ENCODE measurements at regions of chr4 and their contacts with region 1.

Region 1: DNA sequence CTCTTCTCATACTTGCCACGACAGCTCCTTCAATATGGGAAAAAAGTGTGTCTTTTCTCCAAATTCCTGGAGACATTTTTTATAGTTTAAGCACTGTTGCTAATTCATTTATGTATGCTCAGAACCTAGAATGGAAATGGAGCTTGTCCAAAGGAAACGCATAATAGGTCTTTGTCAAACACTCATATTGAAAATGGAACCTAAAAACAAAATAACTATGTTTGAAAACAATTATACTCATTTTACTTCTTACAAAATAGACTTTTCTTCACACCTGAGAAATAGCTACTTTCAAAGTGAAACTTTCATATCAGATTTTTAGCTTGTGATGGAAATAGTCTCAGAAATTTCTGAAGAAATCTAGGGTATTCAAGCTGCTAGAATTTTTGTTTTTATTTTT is 529.7 kb upstream of the BOD1L1 start:
- DNase-seq: no peak
- ATAC-seq: no peak
- H3K4me3 Mint-ChIP-seq: no peak overlapping the region
- H3K27ac Mint-ChIP-seq: no peak overlapping the region
- H3K4me1 Mint-ChIP-seq: no peaks in the 10 kb centered on the region
- H3K27me3 Mint-ChIP-seq: peaks cover 4% of the 10 kb centered on the region

Region 2: DNA sequence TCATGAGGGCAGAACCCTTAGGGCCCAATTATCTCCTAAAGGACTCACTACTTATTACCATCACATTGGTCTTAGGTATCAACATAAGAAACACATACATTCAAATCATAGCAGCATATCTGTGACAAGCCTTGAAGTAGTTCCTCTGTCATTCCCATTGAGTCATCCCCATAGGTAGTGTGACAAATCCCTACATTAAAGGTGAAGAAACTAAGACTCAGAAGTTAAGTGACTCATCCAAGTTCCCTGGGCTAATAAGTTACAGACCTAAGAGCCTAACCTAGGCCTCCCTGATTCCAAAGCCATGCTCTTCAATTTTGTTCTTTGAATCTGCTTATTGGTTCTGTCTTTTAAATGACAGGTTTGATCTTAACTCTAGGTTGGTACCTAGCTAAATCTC is 1679.1 kb after region 1 on chr4:
- CTCF ChIA-PET with region 1: no interaction called
- POLR2A ChIA-PET with region 1: no interaction called
- intact Hi-C with region 1: loop called in 1 of 2 experiments (anchors 5 kb)
- DNase-seq: no peak
- ATAC-seq: peak; percentile 90
- H3K4me3 Mint-ChIP-seq: no peak overlapping the region
- H3K27ac Mint-ChIP-seq: no peak overlapping the region
- H3K4me1 Mint-ChIP-seq: peaks cover 16% of the 10 kb centered on the region
- H3K27me3 Mint-ChIP-seq: no peaks in the 10 kb centered on the region